ENCODE measurements at regions of chr15 and their contacts with region 1.

Region 1: GRCh38 chr15:64046347-64047153 is at the start of gene DAPK2:
- DNase-seq: peak; percentile 61 to 77 (median 67)
- H3K4me3 ChIP-seq: peak within 1 kb of the TSS; percentile 51
- H3K4me3 Mint-ChIP-seq: peak within 1 kb of the TSS; percentile 82 to 89 (median 84)
- H3K27ac ChIP-seq: no peak within 1 kb of the TSS
- H3K27ac Mint-ChIP-seq: peak within 1 kb of the TSS in 7 of 8 donors; percentile 61 to 91 (median 88)
- H3K4me1 ChIP-seq: peaks cover 5% of the 10 kb centered on the region
- H3K4me1 Mint-ChIP-seq: peaks cover 12 to 29% (median 16%) of the 10 kb centered on the region in 3 donors
- H3K27me3 ChIP-seq: no peaks in the 10 kb centered on the region
- H3K27me3 Mint-ChIP-seq: peaks cover 4 to 8% of the 10 kb centered on the region in 2 donors
- total RNA-seq, gene DAPK2: 4.4 to 5.5 TPM

Region 2: DNA sequence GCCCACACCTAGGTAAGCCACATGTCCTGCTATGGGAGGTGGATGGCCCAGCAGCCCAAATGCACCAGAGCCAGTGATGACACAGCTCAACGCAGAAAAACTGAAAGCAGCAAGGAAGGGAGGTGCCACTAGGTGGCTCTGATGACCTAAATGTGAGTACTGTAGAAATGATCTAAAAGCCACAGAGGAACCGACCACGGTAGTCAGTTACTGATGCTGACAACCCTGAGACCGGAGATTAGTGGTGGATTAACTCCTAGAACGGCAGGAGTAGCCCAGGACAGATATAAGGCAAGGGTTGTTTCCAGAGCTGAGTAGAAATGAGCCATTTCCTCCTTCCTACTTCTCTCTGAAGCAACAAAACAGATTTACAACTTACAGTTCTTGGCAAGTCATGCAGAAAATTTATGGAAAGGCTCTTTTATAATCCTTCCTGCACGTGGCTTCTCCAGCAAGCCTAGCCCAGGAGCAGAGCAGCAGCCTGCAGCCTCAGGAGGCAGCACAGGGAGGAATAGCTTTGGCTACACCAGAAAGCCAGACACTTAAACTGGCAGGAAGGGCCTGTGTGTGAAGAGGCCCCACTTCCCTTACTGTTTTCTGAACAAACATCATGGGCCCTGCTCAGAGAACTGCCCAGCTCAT is 436.2 kb before region 1 on chr15:
- CTCF ChIA-PET with region 1: interaction called, 12 read pairs
- POLR2A ChIA-PET with region 1: interaction called, 4 read pairs
- DNase-seq: peak; percentile 51 to 80 (median 63)
- H3K4me3 ChIP-seq: no peak overlapping the region
- H3K4me3 Mint-ChIP-seq: peak overlapping the region in 6 of 7 donors; percentile 1 to 78 (median 29)
- H3K27ac ChIP-seq: no peak overlapping the region
- H3K27ac Mint-ChIP-seq: peak overlapping the region; percentile 70 to 96 (median 92)
- H3K4me1 ChIP-seq: peaks cover 31% of the 10 kb centered on the region
- H3K4me1 Mint-ChIP-seq: peaks cover 40 to 52% (median 41%) of the 10 kb centered on the region in 3 donors
- H3K27me3 ChIP-seq: no peaks in the 10 kb centered on the region
- H3K27me3 Mint-ChIP-seq: peaks cover 0 to 2% of the 10 kb centered on the region in 2 donors

Region 3: DNA sequence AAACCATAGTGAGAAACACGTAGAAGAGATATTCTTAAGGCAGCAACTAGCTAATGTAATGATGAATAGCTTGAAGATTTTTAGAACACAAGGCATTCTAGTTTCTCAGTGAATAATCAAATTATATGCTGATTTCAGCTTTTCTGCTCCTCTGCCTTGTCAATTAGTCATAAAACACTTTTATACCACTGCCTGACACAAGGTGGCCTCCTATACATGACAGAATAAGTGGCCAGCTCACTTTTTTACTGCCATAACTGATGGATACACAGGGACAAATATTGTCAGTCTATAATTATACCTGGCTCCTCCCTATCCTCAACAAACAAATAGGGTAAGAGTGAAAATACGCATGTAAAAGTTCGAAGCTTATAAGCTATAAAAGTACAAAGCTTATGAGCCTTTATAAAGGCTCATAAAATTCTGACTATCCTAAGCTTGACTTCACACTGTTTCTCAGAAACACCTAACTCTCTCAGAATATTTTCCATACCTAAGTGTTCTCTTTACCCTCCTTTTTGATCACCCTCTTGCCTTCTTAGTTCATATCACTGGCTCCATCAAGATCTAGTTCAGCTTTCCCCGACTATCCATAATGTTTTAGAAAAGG is 294.4 kb before region 1 on chr15:
- CTCF ChIA-PET with region 1: interaction called, 64 read pairs
- POLR2A ChIA-PET with region 1: interaction called, 5 read pairs
- DNase-seq: peak in 3 of 5 donors; percentile 42 to 58 (median 52)
- H3K4me3 ChIP-seq: no peak overlapping the region
- H3K4me3 Mint-ChIP-seq: no peak overlapping the region
- H3K27ac ChIP-seq: no peak overlapping the region
- H3K27ac Mint-ChIP-seq: peak overlapping the region in 4 of 8 donors; percentile 0 to 30 (median 22)
- H3K4me1 ChIP-seq: no peaks in the 10 kb centered on the region
- H3K4me1 Mint-ChIP-seq: peaks cover 0 to 5% (median 2%) of the 10 kb centered on the region in 3 donors
- H3K27me3 ChIP-seq: no peaks in the 10 kb centered on the region
- H3K27me3 Mint-ChIP-seq: no peaks in the 10 kb centered on the region

Region 4: GRCh38 chr15:63945007-63945788 is 101.4 kb before region 1 on chr15:
- CTCF ChIA-PET with region 1: interaction called, 72 read pairs
- POLR2A ChIA-PET with region 1: no interaction called
- DNase-seq: peak; percentile 44 to 74 (median 53)
- H3K4me3 ChIP-seq: no peak overlapping the region
- H3K4me3 Mint-ChIP-seq: peak overlapping the region in 1 of 7 donors; percentile 12
- H3K27ac ChIP-seq: no peak overlapping the region
- H3K27ac Mint-ChIP-seq: peak overlapping the region in 7 of 8 donors; percentile 46 to 90 (median 72)
- H3K4me1 ChIP-seq: peaks cover 4% of the 10 kb centered on the region
- H3K4me1 Mint-ChIP-seq: peaks cover 19 to 33% (median 27%) of the 10 kb centered on the region in 3 donors
- H3K27me3 ChIP-seq: no peaks in the 10 kb centered on the region
- H3K27me3 Mint-ChIP-seq: no peaks in the 10 kb centered on the region

Region 5: GRCh38 chr15:64029110-64029509 is 17.4 kb before region 1 on chr15:
- CTCF ChIA-PET with region 1: interaction called, 24 read pairs
- POLR2A ChIA-PET with region 1: interaction called, 3 read pairs
- DNase-seq: no peak
- H3K4me3 ChIP-seq: no peak overlapping the region
- H3K4me3 Mint-ChIP-seq: peak overlapping the region in 5 of 7 donors; percentile 37 to 79 (median 45)
- H3K27ac ChIP-seq: no peak overlapping the region
- H3K27ac Mint-ChIP-seq: peak overlapping the region; percentile 81 to 97 (median 90)
- H3K4me1 ChIP-seq: peaks cover 6% of the 10 kb centered on the region
- H3K4me1 Mint-ChIP-seq: peaks cover 27 to 60% (median 42%) of the 10 kb centered on the region in 3 donors
- H3K27me3 ChIP-seq: no peaks in the 10 kb centered on the region
- H3K27me3 Mint-ChIP-seq: no peaks in the 10 kb centered on the region

Region 6: DNA sequence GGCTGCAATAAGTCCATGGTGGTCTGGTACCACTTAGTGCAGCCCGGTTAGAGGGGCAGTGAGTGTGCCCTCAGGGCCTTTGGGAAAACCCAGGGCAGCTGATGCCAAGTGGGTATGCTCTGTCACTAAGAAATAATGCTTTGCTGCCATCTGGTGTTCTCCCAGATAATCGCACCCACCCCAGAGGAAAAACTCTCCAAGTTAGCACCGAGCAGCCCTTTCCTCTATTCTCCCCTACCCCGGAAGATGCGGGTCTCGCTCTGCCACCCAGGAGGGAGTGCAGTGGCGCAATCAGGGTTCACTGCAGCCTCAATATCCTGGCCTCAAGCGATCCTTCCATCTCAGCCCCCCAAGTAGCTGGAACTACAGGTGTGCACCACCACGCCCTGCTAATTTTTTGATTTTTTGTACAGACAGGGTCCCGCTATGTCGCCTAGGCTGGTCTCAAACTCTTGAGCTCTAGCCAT is 21.0 kb after region 1 on chr15:
- CTCF ChIA-PET with region 1: interaction called, 12 read pairs
- POLR2A ChIA-PET with region 1: no interaction called
- DNase-seq: peak; percentile 51 to 71 (median 59)
- H3K4me3 ChIP-seq: no peak overlapping the region
- H3K4me3 Mint-ChIP-seq: peak overlapping the region in 3 of 7 donors; percentile 15 to 46 (median 29)
- H3K27ac ChIP-seq: no peak overlapping the region
- H3K27ac Mint-ChIP-seq: peak overlapping the region in 3 of 8 donors; percentile 66 to 82 (median 76)
- H3K4me1 ChIP-seq: peaks cover 6% of the 10 kb centered on the region
- H3K4me1 Mint-ChIP-seq: peaks cover 8 to 9% (median 8%) of the 10 kb centered on the region in 3 donors
- H3K27me3 ChIP-seq: no peaks in the 10 kb centered on the region
- H3K27me3 Mint-ChIP-seq: no peaks in the 10 kb centered on the region